Activated CD8-positive, alpha-beta T cell treated with anti-CD3 and anti-CD28 coated beads for 36 hours (primary cell): ENCODE measurements at regions of chr7 and their contacts with region 1.

Region 1: GRCh38 chr7:116525913-116526861 is 1.4 kb downstream of the CAV1 start:
- DNase-seq: peak; percentile 72
- ATAC-seq: peak; percentile 93
- H3K4me3 Mint-ChIP-seq: peak overlapping the region; percentile 75
- H3K27ac Mint-ChIP-seq: peak overlapping the region; percentile 49
- H3K4me1 Mint-ChIP-seq: peaks cover 25% of the 10 kb centered on the region
- H3K27me3 Mint-ChIP-seq: peaks cover 71% of the 10 kb centered on the region
- CTCF ChIP-seq: peak; percentile 87

Region 2: DNA sequence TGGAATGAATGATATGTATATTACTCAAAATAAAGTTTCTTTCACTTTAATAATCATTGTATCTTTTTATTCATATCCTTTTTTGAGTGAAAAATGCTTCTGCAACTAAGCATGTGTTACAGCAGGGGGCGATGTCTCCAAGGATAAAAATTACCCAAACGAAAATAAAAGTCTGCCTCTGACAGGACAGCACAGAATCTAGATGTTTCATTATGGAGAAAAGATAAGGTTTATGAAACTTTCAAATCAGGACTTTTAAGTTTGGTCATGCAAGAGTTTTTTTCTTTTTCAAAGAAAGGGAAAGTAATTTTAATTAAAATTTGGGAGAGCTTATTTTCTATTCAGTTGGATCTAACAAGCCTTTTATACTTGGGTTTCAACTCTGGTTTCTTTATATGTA is 267.5 kb before region 1 on chr7:
- CTCF ChIA-PET with region 1: interaction called, 20 read pairs
- POLR2A ChIA-PET with region 1: interaction called, 3 read pairs
- intact Hi-C with region 1: no loop called
- DNase-seq: peak; percentile 44
- ATAC-seq: peak; percentile 42
- H3K4me3 Mint-ChIP-seq: no peak overlapping the region
- H3K27ac Mint-ChIP-seq: no peak overlapping the region
- H3K4me1 Mint-ChIP-seq: peaks cover 6% of the 10 kb centered on the region
- H3K27me3 Mint-ChIP-seq: no peaks in the 10 kb centered on the region
- CTCF ChIP-seq: peak; percentile 81

Region 3: GRCh38 chr7:116501425-116502167 is 24.6 kb before region 1 on chr7:
- CTCF ChIA-PET with region 1: interaction called, 14 read pairs
- POLR2A ChIA-PET with region 1: no interaction called
- intact Hi-C with region 1: no loop called
- DNase-seq: no peak
- ATAC-seq: no peak
- H3K4me3 Mint-ChIP-seq: no peak overlapping the region
- H3K27ac Mint-ChIP-seq: no peak overlapping the region
- H3K4me1 Mint-ChIP-seq: peaks cover 10% of the 10 kb centered on the region
- H3K27me3 Mint-ChIP-seq: peaks cover 47% of the 10 kb centered on the region
- CTCF ChIP-seq: no peak

Region 4: GRCh38 chr7:116511552-116512519 is 14.4 kb before region 1 on chr7:
- CTCF ChIA-PET with region 1: interaction called, 12 read pairs
- POLR2A ChIA-PET with region 1: no interaction called
- intact Hi-C with region 1: no loop called
- DNase-seq: peak; percentile 31
- ATAC-seq: peak; percentile 91
- H3K4me3 Mint-ChIP-seq: peak overlapping the region; percentile 70
- H3K27ac Mint-ChIP-seq: peak overlapping the region; percentile 69
- H3K4me1 Mint-ChIP-seq: peaks cover 12% of the 10 kb centered on the region
- H3K27me3 Mint-ChIP-seq: peaks cover 21% of the 10 kb centered on the region
- CTCF ChIP-seq: no peak